Heart left ventricle (tissue), 16 donors: ENCODE measurements at regions of chr7 and their contacts with region 1.

Region 1: DNA sequence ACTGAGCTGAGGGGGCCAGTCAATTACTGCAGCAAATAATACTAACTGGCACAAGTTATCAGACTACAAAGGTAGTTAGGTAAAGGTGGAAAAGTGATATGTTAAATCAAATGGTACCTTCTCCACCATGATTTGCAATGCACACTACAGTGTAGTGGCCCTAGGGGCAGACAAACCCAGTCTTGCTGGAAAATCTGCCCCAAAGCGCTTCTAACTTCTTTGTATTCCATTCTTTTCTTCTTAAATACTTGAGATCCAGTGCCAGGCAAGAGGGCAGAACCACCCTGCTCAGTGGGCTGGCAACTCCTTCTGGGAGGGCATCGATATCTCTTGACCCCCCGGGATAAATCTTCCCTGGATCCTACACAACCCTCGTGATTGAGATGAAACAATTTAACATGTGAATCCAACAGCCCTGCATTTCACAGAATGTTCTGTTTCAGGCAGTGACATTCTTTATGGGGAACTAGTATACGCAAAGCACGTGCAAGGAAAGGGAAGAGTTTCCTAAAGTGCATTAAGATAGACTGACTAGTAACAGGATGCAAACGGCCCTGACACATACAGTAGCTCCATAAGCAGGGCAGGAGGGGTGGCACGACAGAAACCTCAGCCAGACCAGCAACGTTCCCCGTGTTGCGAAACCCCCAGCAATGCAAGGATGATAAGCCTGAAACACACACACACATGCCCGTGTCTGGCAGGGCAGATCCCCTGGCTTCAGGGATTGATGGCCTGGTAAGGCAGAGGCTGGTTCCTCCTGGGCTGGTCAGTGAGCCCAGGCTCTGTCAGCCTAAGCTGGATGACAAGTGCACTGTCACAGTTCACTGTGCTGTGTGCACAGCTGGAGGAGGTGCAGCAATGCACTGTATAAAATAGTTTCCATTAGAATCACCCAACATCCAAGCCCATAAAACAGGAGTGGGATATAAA is 89.2 kb downstream of the GSAP start:
- DNase-seq: peak in 4 of 5 donors; percentile 28 to 71 (median 64)
- ATAC-seq: peak; percentile 50 to 76 (median 53)
- H3K4me3 ChIP-seq: no peak overlapping the region
- H3K27ac ChIP-seq: peak overlapping the region in 9 of 12 donors; percentile 2 to 76 (median 23)
- H3K4me1 ChIP-seq: peaks cover 5 to 55% (median 32%) of the 10 kb centered on the region in 12 donors
- H3K27me3 ChIP-seq: no peaks in the 10 kb centered on the region
- CTCF ChIP-seq: no peak
- POLR2A ChIP-seq: no peak

Region 2: GRCh38 chr7:77157446-77157845 is 169.5 kb before region 1 on chr7:
- intact Hi-C with region 1: no loop called
- DNase-seq: no peak
- ATAC-seq: peak in 3 of 4 donors; percentile 22 to 57 (median 47)
- H3K4me3 ChIP-seq: no peak overlapping the region
- H3K27ac ChIP-seq: peak overlapping the region in 1 of 12 donors; percentile 33
- H3K4me1 ChIP-seq: peaks cover 0 to 21% (median 0%) of the 10 kb centered on the region in 12 donors
- H3K27me3 ChIP-seq: no peaks in the 10 kb centered on the region
- CTCF ChIP-seq: no peak
- POLR2A ChIP-seq: no peak

Region 3: DNA sequence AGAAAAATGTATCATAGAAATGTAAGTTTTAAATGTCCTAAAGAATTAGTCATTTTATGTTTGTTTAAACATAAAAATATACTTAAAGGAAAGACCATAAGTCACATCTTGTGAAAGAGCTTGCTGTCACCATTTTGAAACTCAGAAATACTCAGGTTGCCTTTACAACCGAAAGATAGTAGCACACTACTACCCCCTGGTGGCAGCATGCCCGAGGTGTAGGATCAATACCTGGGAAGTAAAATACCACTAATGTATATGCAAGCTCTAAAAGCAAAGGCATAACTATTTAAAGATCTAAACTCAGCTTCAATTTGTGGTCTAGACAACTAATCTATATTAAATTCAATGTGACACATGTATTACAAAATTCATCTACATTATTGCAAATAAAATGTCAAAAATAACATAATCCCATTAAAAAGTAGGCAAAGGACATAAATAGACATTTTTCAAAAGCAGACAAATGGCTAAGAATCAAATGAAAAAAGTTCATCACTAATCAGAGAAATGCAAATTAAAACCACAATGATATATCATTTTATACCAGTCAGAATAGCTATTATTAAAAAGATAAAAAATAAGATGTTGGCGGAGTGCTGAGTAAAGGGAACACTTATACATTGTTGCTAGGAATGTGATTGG is 79.6 kb before region 1 on chr7:
- intact Hi-C with region 1: loop called in 9 of 10 experiments (anchors 2 to 5 kb)
- DNase-seq: peak; percentile 43 to 76 (median 72)
- ATAC-seq: peak in 3 of 4 donors; percentile 48 to 63 (median 60)
- H3K4me3 ChIP-seq: no peak overlapping the region
- H3K27ac ChIP-seq: no peak overlapping the region
- H3K4me1 ChIP-seq: peaks cover 0 to 38% (median 12%) of the 10 kb centered on the region in 12 donors
- H3K27me3 ChIP-seq: peaks cover 0 to 6% (median 0%) of the 10 kb centered on the region in 9 donors
- CTCF ChIP-seq: peak; percentile 62 to 89 (median 78)
- POLR2A ChIP-seq: no peak

Region 4: GRCh38 chr7:77252506-77252905 is 74.5 kb before region 1 on chr7:
- intact Hi-C with region 1: loop called in 9 of 10 experiments (anchors 2 to 5 kb)
- DNase-seq: no peak
- ATAC-seq: peak in 1 of 4 donors; percentile 28
- H3K4me3 ChIP-seq: no peak overlapping the region
- H3K27ac ChIP-seq: no peak overlapping the region
- H3K4me1 ChIP-seq: peaks cover 0 to 14% (median 0%) of the 10 kb centered on the region in 12 donors
- H3K27me3 ChIP-seq: peaks cover 0 to 3% (median 0%) of the 10 kb centered on the region in 9 donors
- CTCF ChIP-seq: no peak
- POLR2A ChIP-seq: no peak

Region 5: DNA sequence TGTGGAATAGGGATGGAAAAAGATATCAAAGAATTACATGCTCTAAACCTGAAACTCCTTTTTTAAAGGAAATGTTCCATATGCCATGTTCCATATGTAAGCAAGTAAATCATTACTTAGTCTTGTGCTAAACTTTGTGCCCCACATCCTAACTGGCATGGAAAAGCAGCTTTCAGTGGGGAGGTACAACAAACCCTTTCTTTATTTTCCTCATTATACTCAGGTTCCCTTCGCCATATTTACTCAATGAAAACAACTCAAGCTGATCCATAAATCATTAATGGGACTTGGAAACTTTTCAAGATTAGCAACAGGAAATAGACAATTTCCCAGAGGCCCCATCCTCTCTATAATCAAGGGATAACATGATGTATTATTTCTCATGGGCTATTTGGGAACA is 33.1 kb after region 1 on chr7:
- intact Hi-C with region 1: no loop called
- DNase-seq: no peak
- ATAC-seq: no peak
- H3K4me3 ChIP-seq: no peak overlapping the region
- H3K27ac ChIP-seq: peak overlapping the region in 3 of 12 donors; percentile 2 to 35 (median 6)
- H3K4me1 ChIP-seq: peaks cover 0 to 4% (median 0%) of the 10 kb centered on the region in 12 donors
- H3K27me3 ChIP-seq: no peaks in the 10 kb centered on the region
- CTCF ChIP-seq: no peak
- POLR2A ChIP-seq: no peak